Posterior vena cava (tissue), 2 donors: ENCODE measurements at regions of chr22 and their contacts with region 1.

Region 1: GRCh38 chr22:31160328-31160978 is 471 bp downstream of the RNF185 start:
- DNase-seq: no peak

Region 2: GRCh38 chr22:30763815-30764686 is 396.4 kb before region 1 on chr22:
- intact Hi-C with region 1: no loop called
- DNase-seq: no peak

Region 3: DNA sequence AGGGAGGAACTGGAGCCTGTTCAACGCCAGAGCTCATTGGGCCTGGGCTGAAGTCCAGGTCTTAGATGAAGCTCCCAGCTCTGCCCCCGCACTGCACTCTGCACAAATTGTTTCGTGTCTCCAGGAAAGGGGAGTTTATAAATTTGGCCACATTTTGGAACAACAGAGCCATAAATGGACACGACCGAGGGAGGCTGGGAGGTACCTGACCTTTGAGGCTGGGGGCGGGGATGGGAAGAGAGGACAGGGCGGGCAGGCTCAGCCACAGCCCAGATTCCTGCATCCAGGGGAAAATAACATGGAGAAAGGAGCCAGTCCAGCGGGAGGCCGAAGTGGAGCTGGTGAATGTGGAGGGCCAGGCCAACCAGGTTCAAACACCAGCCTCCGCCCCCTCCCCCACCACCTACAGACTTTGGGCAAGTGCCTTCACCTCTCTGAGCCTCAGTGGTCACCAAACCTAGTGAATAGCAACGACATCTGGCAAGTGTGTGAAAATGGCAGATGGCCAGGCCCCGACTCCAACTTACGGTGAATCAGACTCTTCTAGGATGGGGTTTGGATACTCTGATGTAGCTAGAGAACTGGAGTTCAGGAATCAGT is 116.1 kb before region 1 on chr22:
- intact Hi-C with region 1: loop called in 1 of 2 experiments (anchors 5 kb)
- DNase-seq: peak; percentile 88